BJ (cell line): ENCODE measurements at regions of chr9 and their contacts with region 1.

Region 1: DNA sequence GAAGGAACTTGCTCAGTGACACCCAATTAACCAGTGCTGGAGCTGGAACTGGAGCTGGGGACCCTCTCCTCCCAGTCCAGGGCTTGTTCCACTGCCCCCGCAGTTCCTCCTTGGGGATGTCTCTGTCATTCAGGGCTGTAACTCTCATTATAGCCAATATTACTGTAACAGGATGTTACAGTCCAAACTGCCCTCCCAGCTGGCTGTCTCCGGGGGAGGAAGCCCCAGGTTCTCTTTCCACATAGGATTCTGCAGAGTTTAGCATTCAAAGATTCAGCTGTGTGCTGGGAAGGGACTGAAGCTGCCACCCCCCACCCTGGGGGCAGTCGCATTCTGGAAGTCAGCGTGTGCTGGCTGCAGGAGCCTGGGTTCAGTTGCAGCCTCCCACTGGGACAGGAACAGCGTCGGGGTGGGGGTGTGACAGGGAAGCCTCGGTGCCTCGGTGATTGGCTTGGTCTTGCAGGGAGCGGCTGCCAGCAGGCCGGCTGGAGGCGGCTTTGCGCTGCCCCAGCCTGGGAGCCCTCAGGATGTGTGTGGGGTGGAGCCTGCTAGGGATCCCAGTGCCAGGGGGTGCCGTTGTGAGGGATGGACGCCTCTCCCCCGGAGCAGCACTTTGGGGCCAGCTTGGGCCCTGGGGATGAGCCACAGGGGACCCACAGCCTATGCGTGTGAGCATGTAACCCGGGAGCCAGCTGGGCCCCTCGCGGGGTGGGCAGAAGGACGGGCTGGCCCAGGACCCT is 101.1 kb downstream of the RGS3 start:
- DNase-seq: no peak
- H3K4me3 ChIP-seq: peak overlapping the region; percentile 64
- H3K27me3 ChIP-seq: no peaks in the 10 kb centered on the region
- CTCF ChIP-seq: no peak

Region 2: GRCh38 chr9:113454914-113455761 is 109.5 kb before region 1 on chr9:
- CTCF ChIA-PET with region 1: no interaction called
- POLR2A ChIA-PET with region 1: no interaction called
- DNase-seq: peak; percentile 59
- H3K4me3 ChIP-seq: no peak overlapping the region
- H3K27me3 ChIP-seq: no peaks in the 10 kb centered on the region
- CTCF ChIP-seq: no peak

Region 3: GRCh38 chr9:113548221-113549041 is 16.2 kb before region 1 on chr9:
- CTCF ChIA-PET with region 1: no interaction called
- POLR2A ChIA-PET with region 1: no interaction called
- DNase-seq: no peak
- H3K4me3 ChIP-seq: no peak overlapping the region
- H3K27me3 ChIP-seq: peaks cover 7% of the 10 kb centered on the region
- CTCF ChIP-seq: no peak

Region 4: DNA sequence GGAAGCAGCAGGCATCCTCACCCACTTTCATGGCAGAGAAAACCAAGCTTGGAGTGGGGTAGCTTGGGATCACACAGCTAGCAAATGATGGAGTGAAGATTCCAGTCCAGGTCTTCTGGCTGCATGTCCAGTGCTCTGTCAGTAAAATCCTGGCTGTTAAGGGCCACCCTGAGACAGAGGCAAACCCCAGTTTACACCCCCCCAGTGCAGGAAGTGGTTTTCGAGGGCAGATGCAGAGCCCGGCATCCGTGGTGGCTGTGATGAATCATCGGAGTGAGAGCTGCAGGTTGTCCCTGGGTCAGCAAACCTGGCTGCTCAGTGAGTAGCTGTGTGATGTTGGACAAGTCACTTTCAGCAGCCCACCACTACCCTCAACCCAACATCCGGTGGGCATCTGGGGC is 14.2 kb after region 1 on chr9:
- CTCF ChIA-PET with region 1: interaction called, 10 read pairs
- POLR2A ChIA-PET with region 1: no interaction called
- DNase-seq: peak; percentile 84
- H3K4me3 ChIP-seq: no peak overlapping the region
- H3K27me3 ChIP-seq: no peaks in the 10 kb centered on the region
- CTCF ChIP-seq: no peak